Naive thymus-derived CD8-positive, alpha-beta T cell (primary cell): ENCODE measurements at regions of chr1 and their contacts with region 1.

Region 1: GRCh38 chr1:231421993-231422764 is at the start of gene EGLN1:
- DNase-seq: peak; percentile 74 to 87 (median 82)
- ATAC-seq: peak; percentile 82 to 86
- H3K4me3 Mint-ChIP-seq: peak within 1 kb of the TSS; percentile 80 to 97 (median 95)
- H3K27ac Mint-ChIP-seq: peak within 1 kb of the TSS; percentile 64 to 97 (median 92)
- H3K4me1 Mint-ChIP-seq: peaks cover 30 to 49% (median 45%) of the 10 kb centered on the region in 4 donors
- H3K27me3 Mint-ChIP-seq: no peaks in the 10 kb centered on the region
- polyA plus RNA-seq, gene EGLN1: 17.8 to 27.3 (median 22.8) TPM

Region 2: DNA sequence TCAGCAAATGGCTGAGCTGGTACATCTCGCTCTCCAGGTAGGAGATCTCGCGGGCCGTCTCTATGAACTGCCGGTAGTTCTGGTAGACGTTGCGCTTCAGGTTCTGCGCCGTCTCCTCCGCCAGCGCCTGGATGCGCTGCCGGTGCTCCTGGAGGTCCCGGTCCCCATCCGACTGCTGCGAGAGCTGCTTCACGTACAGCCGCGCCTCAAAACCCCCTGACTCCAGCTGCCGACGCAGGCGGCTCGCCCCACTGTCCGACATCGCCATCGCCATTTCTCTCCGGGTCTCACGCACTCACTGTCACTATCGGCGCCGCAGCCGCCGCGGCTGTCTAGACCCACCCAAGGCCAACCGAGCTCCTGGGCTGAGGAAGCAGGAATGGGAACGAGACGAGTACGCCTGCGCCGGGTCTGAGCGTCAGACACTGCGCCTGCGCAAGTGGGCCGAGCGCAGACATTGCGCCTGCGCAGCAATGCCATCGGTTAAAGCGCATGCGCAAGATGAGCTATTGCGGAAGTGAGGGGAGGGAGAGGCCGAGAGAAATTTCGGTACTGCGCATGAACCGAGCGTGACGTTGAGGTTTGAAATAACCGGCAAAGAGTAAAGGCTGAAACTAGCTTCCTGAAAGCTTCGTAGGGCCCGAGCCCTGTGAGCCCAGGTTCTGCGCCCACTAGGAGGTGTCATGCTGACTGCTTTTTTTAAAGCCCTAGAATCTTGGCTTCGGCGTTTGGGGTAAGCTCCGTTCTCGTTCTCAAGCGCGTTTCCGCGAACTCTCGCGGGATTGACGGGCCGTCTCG is 84.5 kb before region 1 on chr1 and contains the start of gene EXOC8:
- POLR2A ChIA-PET with region 1: interaction called, 23 read pairs
- DNase-seq: peak; percentile 93 to 99 (median 98)
- ATAC-seq: peak; percentile 81 to 82
- H3K4me3 Mint-ChIP-seq: peak within 1 kb of the TSS; percentile 97 to 100 (median 99)
- H3K27ac Mint-ChIP-seq: peak within 1 kb of the TSS; percentile 99 to 100 (median 100)
- H3K4me1 Mint-ChIP-seq: peaks cover 28 to 75% (median 52%) of the 10 kb centered on the region in 4 donors
- H3K27me3 Mint-ChIP-seq: peaks cover 0 to 5% (median 0%) of the 10 kb centered on the region in 5 donors
- polyA plus RNA-seq, gene EXOC8: 1.9 to 3.0 (median 2.5) TPM

Region 3: DNA sequence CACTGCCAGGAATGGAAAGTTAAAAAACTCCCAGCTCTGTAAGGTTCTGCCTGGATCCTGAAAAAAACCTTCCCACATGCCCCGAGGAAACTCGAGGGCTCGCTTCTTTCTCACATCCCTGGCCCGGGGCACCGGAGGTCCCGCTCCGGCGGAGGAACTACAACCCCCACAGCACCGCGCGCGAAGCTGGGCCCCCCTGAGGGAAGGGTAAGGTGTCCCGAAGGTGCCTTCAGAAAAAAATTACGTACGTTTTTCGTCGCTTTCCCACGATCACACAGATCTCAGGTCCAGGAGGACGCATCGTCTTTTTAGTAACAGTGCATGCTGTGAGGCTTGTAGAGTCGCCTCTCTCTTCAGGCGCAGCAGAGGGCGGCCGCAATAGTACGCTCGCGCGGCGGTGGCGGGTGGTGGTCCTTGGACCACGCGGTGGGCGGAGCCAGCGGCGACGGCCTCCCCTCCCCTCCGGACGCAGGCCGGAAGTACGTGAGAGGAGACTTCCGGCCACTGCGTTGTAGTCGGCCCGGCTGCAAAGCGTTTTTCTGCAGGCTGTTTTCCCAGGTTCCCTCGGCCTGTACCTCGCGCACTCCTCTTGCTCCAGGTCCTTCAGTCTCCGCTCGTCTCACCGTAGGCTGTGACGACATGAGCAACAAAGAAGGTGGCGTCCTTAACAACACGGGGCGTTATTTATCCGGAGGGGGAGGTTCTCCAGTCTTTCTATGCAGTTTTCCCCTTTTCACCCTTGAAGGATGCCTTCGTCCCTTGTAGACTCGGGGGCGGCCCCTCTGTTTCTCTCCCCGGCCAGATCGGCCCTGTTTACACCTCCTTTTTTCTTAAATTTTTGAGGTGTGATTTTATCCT is 106.2 kb after region 1 on chr1 and contains the start of gene TSNAX:
- POLR2A ChIA-PET with region 1: interaction called, 37 read pairs
- DNase-seq: peak; percentile 84 to 97 (median 90)
- ATAC-seq: peak; percentile 86 to 88
- H3K4me3 Mint-ChIP-seq: peak within 1 kb of the TSS; percentile 94 to 99 (median 98)
- H3K27ac Mint-ChIP-seq: peak within 1 kb of the TSS; percentile 97 to 100 (median 100)
- H3K4me1 Mint-ChIP-seq: peaks cover 19 to 56% (median 41%) of the 10 kb centered on the region in 4 donors
- H3K27me3 Mint-ChIP-seq: no peaks in the 10 kb centered on the region
- polyA plus RNA-seq, gene TSNAX: 80.9 to 99.7 (median 99.6) TPM